ENCODE measurements at regions of chr12 and their contacts with region 1.

Region 1: GRCh38 chr12:89542912-89543592 is 17.2 kb upstream of the POC1B start:
- DNase-seq: peak; percentile 33 to 84 (median 50)
- ATAC-seq: peak; percentile 88
- H3K4me3 ChIP-seq: no peak overlapping the region
- H3K4me3 Mint-ChIP-seq: no peak overlapping the region
- H3K27ac ChIP-seq: no peak overlapping the region
- H3K27ac Mint-ChIP-seq: no peak overlapping the region
- H3K4me1 ChIP-seq: peaks cover 10% of the 10 kb centered on the region
- H3K4me1 Mint-ChIP-seq: peaks cover 7% of the 10 kb centered on the region
- H3K27me3 ChIP-seq: no peaks in the 10 kb centered on the region
- H3K27me3 Mint-ChIP-seq: no peaks in the 10 kb centered on the region
- CTCF ChIP-seq: peak; percentile 94

Region 2: GRCh38 chr12:89405626-89406345 is 137.3 kb before region 1 on chr12:
- CTCF ChIA-PET with region 1: no interaction called
- POLR2A ChIA-PET with region 1: no interaction called
- intact Hi-C with region 1: no loop called
- DNase-seq: no peak
- ATAC-seq: no peak
- H3K4me3 ChIP-seq: no peak overlapping the region
- H3K4me3 Mint-ChIP-seq: no peak overlapping the region
- H3K27ac ChIP-seq: no peak overlapping the region
- H3K27ac Mint-ChIP-seq: no peak overlapping the region
- H3K4me1 ChIP-seq: no peaks in the 10 kb centered on the region
- H3K4me1 Mint-ChIP-seq: no peaks in the 10 kb centered on the region
- H3K27me3 ChIP-seq: no peaks in the 10 kb centered on the region
- H3K27me3 Mint-ChIP-seq: no peaks in the 10 kb centered on the region
- CTCF ChIP-seq: no peak

Region 3: DNA sequence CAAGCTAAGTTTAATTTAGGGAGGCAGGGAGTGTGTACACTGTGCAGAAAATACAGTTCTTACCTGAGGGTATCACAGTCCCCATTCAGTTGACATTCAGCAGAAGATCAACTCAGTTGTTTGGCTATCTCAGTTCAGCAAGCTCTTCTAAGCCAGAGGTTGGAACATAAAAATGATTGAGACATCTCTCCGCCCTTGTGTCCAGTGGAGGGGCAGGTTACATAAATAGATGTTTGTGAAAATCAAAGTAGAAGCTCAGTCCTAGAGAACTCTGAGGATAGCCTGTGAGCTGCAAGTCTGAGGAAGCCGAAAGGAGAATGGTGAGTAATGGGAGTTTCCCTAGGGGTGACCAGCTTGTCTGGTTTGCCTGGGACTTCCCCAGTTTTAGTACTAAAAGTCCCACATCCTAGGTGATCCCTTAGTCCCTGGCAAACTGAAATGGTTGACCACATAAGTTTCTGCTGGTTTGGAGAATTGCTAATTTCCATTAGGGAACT is 417.0 kb after region 1 on chr12:
- CTCF ChIA-PET with region 1: no interaction called
- POLR2A ChIA-PET with region 1: no interaction called
- intact Hi-C with region 1: loop called in 1 of 2 experiments (anchors 5 kb)
- DNase-seq: peak in 3 of 14 experiments; percentile 25 to 83 (median 72)
- ATAC-seq: peak; percentile 41
- H3K4me3 ChIP-seq: no peak overlapping the region
- H3K4me3 Mint-ChIP-seq: no peak overlapping the region
- H3K27ac ChIP-seq: no peak overlapping the region
- H3K27ac Mint-ChIP-seq: no peak overlapping the region
- H3K4me1 ChIP-seq: no peaks in the 10 kb centered on the region
- H3K4me1 Mint-ChIP-seq: peaks cover 5% of the 10 kb centered on the region
- H3K27me3 ChIP-seq: no peaks in the 10 kb centered on the region
- H3K27me3 Mint-ChIP-seq: no peaks in the 10 kb centered on the region
- CTCF ChIP-seq: no peak

Region 4: GRCh38 chr12:90102957-90103652 is 560.1 kb after region 1 on chr12:
- CTCF ChIA-PET with region 1: interaction called, 4 read pairs
- POLR2A ChIA-PET with region 1: interaction called, 4 read pairs
- intact Hi-C with region 1: loop called (anchors 1 kb)
- DNase-seq: peak in 4 of 14 experiments; percentile 22 to 68 (median 62)
- ATAC-seq: peak; percentile 82
- H3K4me3 ChIP-seq: peak overlapping the region; percentile 13
- H3K4me3 Mint-ChIP-seq: peak overlapping the region; percentile 56
- H3K27ac ChIP-seq: no peak overlapping the region
- H3K27ac Mint-ChIP-seq: no peak overlapping the region
- H3K4me1 ChIP-seq: no peaks in the 10 kb centered on the region
- H3K4me1 Mint-ChIP-seq: peaks cover 17% of the 10 kb centered on the region
- H3K27me3 ChIP-seq: no peaks in the 10 kb centered on the region
- H3K27me3 Mint-ChIP-seq: no peaks in the 10 kb centered on the region
- CTCF ChIP-seq: peak; percentile 76

Region 5: GRCh38 chr12:90940872-90941499 is 1397.9 kb after region 1 on chr12:
- CTCF ChIA-PET with region 1: no interaction called
- POLR2A ChIA-PET with region 1: no interaction called
- intact Hi-C with region 1: loop called (anchors 5 kb)
- DNase-seq: peak in 3 of 14 experiments; percentile 17 to 29 (median 22)
- ATAC-seq: no peak
- H3K4me3 ChIP-seq: no peak overlapping the region
- H3K4me3 Mint-ChIP-seq: no peak overlapping the region
- H3K27ac ChIP-seq: no peak overlapping the region
- H3K27ac Mint-ChIP-seq: no peak overlapping the region
- H3K4me1 ChIP-seq: no peaks in the 10 kb centered on the region
- H3K4me1 Mint-ChIP-seq: no peaks in the 10 kb centered on the region
- H3K27me3 ChIP-seq: peaks cover 0 to 2% of the 10 kb centered on the region in 2 experiments
- H3K27me3 Mint-ChIP-seq: peaks cover 8% of the 10 kb centered on the region
- CTCF ChIP-seq: peak; percentile 40

Measured in CD4-positive, alpha-beta T cell (primary cell).